H1 (cell line): ENCODE measurements at regions of chr3 and their contacts with region 1.

Region 1: DNA sequence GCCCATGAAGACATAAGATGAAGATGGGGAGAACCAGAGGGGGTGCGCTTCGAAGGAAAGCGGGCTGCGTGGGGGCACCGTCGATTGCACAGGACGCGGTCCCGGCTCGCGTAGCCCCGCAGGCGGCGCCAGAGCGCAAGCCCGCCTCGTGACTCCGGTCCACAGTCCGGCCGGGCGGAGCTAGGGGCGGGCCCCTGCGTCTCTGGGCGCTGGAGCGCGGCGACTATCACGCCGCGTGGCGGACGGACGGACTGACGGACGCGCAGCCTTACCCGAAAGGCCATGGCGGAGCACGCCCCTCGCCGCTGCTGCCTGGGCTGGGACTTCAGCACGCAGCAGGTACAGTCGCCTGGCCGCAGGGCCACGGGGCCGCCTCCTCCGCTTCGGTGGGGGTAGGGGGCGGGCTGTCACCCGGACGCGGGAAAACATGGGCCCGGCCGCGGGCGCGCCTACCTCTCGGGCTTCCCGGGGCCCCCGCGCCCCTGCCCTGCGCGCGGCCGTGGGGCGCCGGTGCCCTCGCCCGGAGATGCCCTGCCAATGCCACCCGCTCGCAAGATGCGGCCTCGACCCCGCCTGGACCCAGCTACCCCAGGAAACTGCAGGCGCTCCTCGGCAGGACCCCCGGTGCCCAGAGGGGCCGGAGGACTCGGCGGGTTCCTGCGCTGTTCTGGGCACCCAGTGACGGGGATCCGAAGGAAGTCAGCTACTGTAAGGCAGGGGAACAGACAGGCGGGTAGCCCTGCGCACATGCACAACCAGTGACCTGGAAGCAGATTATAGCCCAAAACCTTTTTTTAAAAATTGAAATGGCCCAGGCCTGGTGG is at the start of gene XYLB:
- DNase-seq: peak; percentile 33 to 86
- H3K4me3 ChIP-seq: peak within 1 kb of the TSS; percentile 52 to 71 (median 65)
- H3K27ac ChIP-seq: no peak within 1 kb of the TSS
- H3K4me1 ChIP-seq: 0 out of 7 replicates have a peak, but pooled peaks cover 0 to 3% (median 0%) of the 10 kb centered on the region in 4 experiments
- H3K27me3 ChIP-seq: peaks cover 0 to 14% (median 4%) of the 10 kb centered on the region in 4 experiments; a peak in 4 of 7 replicates
- CTCF ChIP-seq: peak; percentile 72 to 85 (median 76)
- EP300 ChIP-seq: no peak
- POLR2A ChIP-seq: 0 out of 3 replicates have a peak, but pooled peaks of 1 of the 2 experiments have one; percentile 26
- RAD21 ChIP-seq: peak; percentile 59 to 64
- total RNA-seq, gene XYLB: 5.3 and 5.5 TPM in 2 replicates

Region 2: GRCh38 chr3:38264353-38264771 is 82.4 kb before region 1 on chr3:
- CTCF ChIA-PET with region 1: no interaction called
- POLR2A ChIA-PET with region 1: no interaction called
- DNase-seq: no peak
- H3K4me3 ChIP-seq: no peak overlapping the region
- H3K27ac ChIP-seq: no peak overlapping the region
- H3K4me1 ChIP-seq: peaks cover 0 to 10% (median 3%) of the 10 kb centered on the region in 4 experiments; a peak in 3 of 7 replicates
- H3K27me3 ChIP-seq: no peaks in the 10 kb centered on the region; a peak in 1 of 7 replicates
- CTCF ChIP-seq: no peak
- EP300 ChIP-seq: no peak
- POLR2A ChIP-seq: no peak
- RAD21 ChIP-seq: no peak

Region 3: DNA sequence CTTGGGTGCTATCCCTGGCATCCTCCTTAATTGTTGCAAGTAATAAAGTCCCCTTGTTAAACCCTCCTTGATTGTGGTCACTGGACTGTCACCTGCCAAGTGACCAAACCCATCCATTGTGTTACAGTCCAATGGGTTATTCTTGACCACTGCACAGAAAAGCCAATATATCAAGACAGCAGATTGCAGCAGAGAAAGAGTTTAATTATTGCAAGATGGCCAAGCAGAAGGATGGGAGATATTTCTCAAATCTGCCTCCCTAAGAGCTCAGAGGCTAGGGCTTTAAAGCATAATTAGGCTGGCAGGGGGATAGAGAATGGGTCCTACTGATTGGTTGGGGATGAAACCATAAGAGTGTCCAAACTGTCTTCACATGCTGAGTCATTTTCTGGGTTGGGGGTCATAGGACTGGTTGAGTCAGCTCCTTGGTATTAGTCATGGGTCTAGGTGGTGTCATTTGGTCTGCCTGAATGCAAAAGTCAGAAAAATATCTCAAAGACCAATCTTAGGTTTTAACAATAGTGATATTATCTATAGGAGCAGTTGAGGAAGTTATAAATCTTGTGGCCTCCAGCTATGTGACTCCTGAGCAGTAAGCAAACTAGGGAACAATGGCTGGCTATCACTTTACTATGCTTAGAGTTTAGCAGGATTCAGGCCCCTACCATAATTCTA is 19.3 kb before region 1 on chr3:
- CTCF ChIA-PET with region 1: interaction called, 21 read pairs
- POLR2A ChIA-PET with region 1: no interaction called
- DNase-seq: no peak
- H3K4me3 ChIP-seq: no peak overlapping the region
- H3K27ac ChIP-seq: no peak overlapping the region
- H3K4me1 ChIP-seq: no peaks in the 10 kb centered on the region
- H3K27me3 ChIP-seq: no peaks in the 10 kb centered on the region; a peak in 2 of 7 replicates
- CTCF ChIP-seq: no peak
- EP300 ChIP-seq: no peak
- POLR2A ChIP-seq: no peak
- RAD21 ChIP-seq: no peak

Region 4: GRCh38 chr3:38454884-38455638 is 108.3 kb after region 1 on chr3:
- CTCF ChIA-PET with region 1: interaction called, 9 read pairs
- POLR2A ChIA-PET with region 1: interaction called, 10 read pairs
- DNase-seq: peak; percentile 53 to 92
- H3K4me3 ChIP-seq: peak overlapping the region; percentile 74 to 99 (median 91)
- H3K27ac ChIP-seq: peak overlapping the region; percentile 99
- H3K4me1 ChIP-seq: peaks cover 10 to 24% (median 16%) of the 10 kb centered on the region in 4 experiments
- H3K27me3 ChIP-seq: no peaks in the 10 kb centered on the region
- CTCF ChIP-seq: no peak
- EP300 ChIP-seq: no peak
- POLR2A ChIP-seq: peak; percentile 36 to 92
- RAD21 ChIP-seq: 0 out of 4 replicates have a peak, but pooled peaks of 1 of the 2 experiments have one; percentile 2

Region 5: GRCh38 chr3:38601956-38602550 is 255.3 kb after region 1 on chr3:
- CTCF ChIA-PET with region 1: no interaction called
- POLR2A ChIA-PET with region 1: no interaction called
- DNase-seq: no peak
- H3K4me3 ChIP-seq: no peak overlapping the region
- H3K27ac ChIP-seq: no peak overlapping the region
- H3K4me1 ChIP-seq: no peaks in the 10 kb centered on the region
- H3K27me3 ChIP-seq: no peaks in the 10 kb centered on the region
- CTCF ChIP-seq: no peak
- EP300 ChIP-seq: no peak
- POLR2A ChIP-seq: no peak
- RAD21 ChIP-seq: no peak

Region 6: DNA sequence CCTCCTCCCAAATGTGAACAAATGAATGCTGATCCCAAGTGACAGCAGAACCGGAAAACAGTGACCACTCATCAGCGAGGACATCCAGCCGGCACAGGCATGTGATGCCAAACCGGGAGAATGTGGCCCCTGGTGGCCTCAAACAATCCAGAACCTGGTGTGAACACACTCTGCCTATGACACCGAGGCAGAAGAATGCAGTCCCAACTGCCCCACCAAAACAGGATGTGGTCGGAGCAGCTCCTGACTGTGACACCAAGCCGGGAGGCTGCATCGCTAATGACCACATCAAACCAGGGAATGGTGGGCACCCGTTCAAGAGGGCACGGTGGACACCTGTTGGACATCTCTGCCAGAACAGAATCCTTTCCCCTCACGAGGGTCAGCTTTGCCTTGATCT is 287.3 kb after region 1 on chr3:
- CTCF ChIA-PET with region 1: no interaction called
- POLR2A ChIA-PET with region 1: no interaction called
- DNase-seq: no peak
- H3K4me3 ChIP-seq: no peak overlapping the region
- H3K27ac ChIP-seq: no peak overlapping the region
- H3K4me1 ChIP-seq: peaks cover 7 to 32% (median 17%) of the 10 kb centered on the region in 4 experiments
- H3K27me3 ChIP-seq: no peaks in the 10 kb centered on the region
- CTCF ChIP-seq: no peak
- EP300 ChIP-seq: no peak
- POLR2A ChIP-seq: no peak
- RAD21 ChIP-seq: no peak